IMR-90 (cell line): ENCODE measurements at regions of chr3 and their contacts with region 1.

Region 1: DNA sequence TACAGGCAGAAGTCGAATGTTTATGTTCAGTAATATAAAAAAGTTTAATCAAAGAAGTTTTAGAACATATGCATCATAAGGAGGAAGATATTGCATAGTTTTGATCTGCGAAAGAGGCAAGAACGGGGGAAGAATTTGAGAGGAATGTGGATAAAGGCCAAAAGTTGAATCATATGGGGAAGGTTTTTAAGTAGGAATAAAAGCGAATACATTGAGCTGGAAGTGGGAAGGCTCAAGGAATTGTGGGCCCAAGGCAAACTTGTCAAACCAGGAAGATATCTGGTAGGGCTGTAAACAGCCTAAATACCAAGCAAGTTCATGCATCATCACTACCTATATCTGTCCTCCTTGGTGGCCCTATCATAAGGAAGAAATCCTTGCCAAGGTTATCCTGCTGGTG is 186.9 kb downstream of the MAGI1 start:
- DNase-seq: peak; percentile 94
- ATAC-seq: peak; percentile 74
- H3K4me3 ChIP-seq: no peak overlapping the region
- H3K27ac ChIP-seq: peak overlapping the region; percentile 77; the same call in 1 of the 2 replicates
- H3K4me1 ChIP-seq: peaks cover 9% of the 10 kb centered on the region
- H3K27me3 ChIP-seq: no peaks in the 10 kb centered on the region
- CTCF ChIP-seq: no peak
- POLR2A ChIP-seq: no peak
- RAD21 ChIP-seq: no peak

Region 2: DNA sequence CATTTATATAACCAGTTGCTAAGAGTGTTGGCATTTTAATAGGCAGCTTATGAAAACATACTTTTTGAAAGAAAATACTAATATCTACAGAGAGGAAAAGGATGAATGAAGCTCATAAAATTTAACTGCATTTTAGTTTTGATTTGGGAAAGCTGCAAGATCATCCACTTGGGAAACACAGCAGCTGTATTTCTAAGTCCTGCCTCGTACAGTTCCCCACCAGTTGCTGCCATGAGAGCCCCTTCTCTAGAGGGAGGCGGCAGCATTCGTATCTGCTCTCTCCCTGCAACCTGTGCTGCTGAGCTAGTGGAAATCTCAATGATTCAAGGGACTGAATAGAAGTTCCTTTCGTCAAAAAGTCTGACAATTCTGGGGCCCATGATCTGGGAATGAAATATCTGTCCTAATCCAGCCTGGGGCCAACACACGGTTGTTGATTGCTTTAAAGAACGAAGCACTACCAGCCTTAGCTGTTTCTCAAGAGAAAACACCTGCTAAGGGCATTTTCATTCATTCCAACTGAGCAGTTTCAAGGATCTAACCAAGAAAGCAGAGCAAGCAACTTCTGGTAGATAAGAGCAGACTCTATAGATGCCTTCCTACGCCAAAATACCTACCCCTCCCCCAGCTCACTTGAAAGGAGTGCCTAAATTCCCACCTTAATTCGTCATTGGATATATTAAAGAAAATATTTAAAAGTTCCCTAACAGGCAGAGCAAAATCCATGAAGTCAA is 36.8 kb before region 1 on chr3:
- CTCF ChIA-PET with region 1: no interaction called
- POLR2A ChIA-PET with region 1: no interaction called
- dilution Hi-C with region 1: no loop called
- in situ Hi-C with region 1: no loop called
- intact Hi-C with region 1: no loop called
- DNase-seq: no peak
- ATAC-seq: no peak
- H3K4me3 ChIP-seq: no peak overlapping the region
- H3K27ac ChIP-seq: no peak overlapping the region
- H3K4me1 ChIP-seq: no peaks in the 10 kb centered on the region
- H3K27me3 ChIP-seq: no peaks in the 10 kb centered on the region
- CTCF ChIP-seq: no peak
- POLR2A ChIP-seq: no peak
- RAD21 ChIP-seq: no peak

Region 3: DNA sequence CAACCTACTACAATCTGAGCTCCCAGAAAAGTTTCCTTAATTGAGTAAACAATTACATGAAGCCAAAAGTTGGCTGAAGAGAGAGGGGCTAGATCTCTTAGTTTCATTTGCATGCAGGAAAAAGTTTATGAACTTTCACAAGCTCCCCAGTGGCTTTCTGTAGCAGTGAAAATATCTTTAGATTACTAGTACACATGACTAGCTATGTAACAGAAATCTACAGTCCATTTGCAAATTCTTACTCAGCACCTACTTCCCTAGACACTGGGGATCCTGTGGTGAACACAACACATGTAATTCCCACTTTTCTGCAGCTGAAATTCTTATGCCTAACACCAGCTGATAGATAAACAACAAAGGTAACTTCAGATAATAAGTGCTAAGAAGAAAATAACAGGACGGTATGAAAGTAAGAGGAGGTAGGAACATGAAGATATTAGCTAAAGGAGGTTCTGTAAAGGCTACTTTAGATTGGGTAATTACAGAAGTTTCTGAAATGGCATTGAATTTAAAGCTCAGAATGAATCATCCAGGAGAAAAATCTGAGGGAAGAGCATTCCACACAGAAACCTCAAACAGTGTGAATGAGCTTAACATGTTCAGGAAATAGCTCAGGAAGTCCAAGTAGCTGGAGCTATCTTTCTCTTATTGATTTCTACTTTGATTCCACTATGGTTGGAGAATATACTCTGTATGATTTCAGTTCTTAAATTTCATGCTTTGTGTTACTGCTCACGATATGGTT is 17.9 kb before region 1 on chr3:
- CTCF ChIA-PET with region 1: interaction called, 3 read pairs
- POLR2A ChIA-PET with region 1: no interaction called
- dilution Hi-C with region 1: no loop called
- in situ Hi-C with region 1: no loop called
- intact Hi-C with region 1: loop called (anchors 2 kb)
- DNase-seq: peak; percentile 80
- ATAC-seq: peak; percentile 82
- H3K4me3 ChIP-seq: peak overlapping the region; percentile 29; the same call in 1 of the 2 replicates
- H3K27ac ChIP-seq: no peak overlapping the region
- H3K4me1 ChIP-seq: peaks cover 13% of the 10 kb centered on the region; the same call in 1 of the 2 replicates
- H3K27me3 ChIP-seq: no peaks in the 10 kb centered on the region
- CTCF ChIP-seq: no peak
- POLR2A ChIP-seq: no peak
- RAD21 ChIP-seq: no peak

Region 4: DNA sequence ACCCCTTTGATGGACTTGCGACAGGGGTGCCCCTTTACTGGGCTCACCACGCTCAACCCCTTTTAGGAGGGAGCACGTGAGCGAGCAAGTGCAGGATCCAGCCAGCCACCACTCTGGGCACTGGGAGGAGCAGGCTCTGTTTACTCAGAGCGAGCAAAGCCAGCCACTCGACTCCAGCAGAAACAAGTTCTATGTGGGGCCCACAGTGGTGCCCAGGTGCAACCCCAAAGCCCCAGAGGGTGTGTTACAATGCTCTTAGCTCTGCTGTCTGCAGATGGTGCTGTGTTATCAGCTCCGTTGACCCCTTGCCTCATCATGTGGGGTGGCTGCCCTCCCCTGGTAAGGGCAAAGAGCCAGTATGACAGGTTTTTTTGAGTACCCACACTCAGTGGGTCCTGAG is 1922.8 kb after region 1 on chr3:
- CTCF ChIA-PET with region 1: no interaction called
- POLR2A ChIA-PET with region 1: interaction called, 10 read pairs
- dilution Hi-C with region 1: no loop called
- in situ Hi-C with region 1: no loop called
- intact Hi-C with region 1: no loop called
- DNase-seq: no peak
- ATAC-seq: no peak
- H3K4me3 ChIP-seq: no peak overlapping the region
- H3K27ac ChIP-seq: no peak overlapping the region
- H3K4me1 ChIP-seq: no peaks in the 10 kb centered on the region
- H3K27me3 ChIP-seq: no peaks in the 10 kb centered on the region
- CTCF ChIP-seq: no peak
- POLR2A ChIP-seq: no peak
- RAD21 ChIP-seq: no peak